ENCODE measurements at regions of chr4 and their contacts with region 1.

Region 1: GRCh38 chr4:121192480-121192879 is 28.4 kb upstream of the TNIP3 start:
- DNase-seq: no peak
- H3K4me3 Mint-ChIP-seq: peak overlapping the region; percentile 14
- H3K27ac Mint-ChIP-seq: peak overlapping the region; percentile 56
- H3K4me1 Mint-ChIP-seq: peaks cover 59% of the 10 kb centered on the region
- H3K27me3 Mint-ChIP-seq: no peaks in the 10 kb centered on the region

Region 2: GRCh38 chr4:121094297-121094966 is 98.0 kb before region 1 on chr4:
- CTCF ChIA-PET with region 1: no interaction called
- POLR2A ChIA-PET with region 1: no interaction called
- DNase-seq: no peak
- H3K4me3 Mint-ChIP-seq: no peak overlapping the region
- H3K27ac Mint-ChIP-seq: no peak overlapping the region
- H3K4me1 Mint-ChIP-seq: no peaks in the 10 kb centered on the region
- H3K27me3 Mint-ChIP-seq: no peaks in the 10 kb centered on the region

Region 3: GRCh38 chr4:121182296-121182695 is 10.2 kb before region 1 on chr4:
- CTCF ChIA-PET with region 1: interaction called, 30 read pairs
- POLR2A ChIA-PET with region 1: interaction called, 5 read pairs
- DNase-seq: no peak
- H3K4me3 Mint-ChIP-seq: peak overlapping the region; percentile 70
- H3K27ac Mint-ChIP-seq: peak overlapping the region; percentile 84
- H3K4me1 Mint-ChIP-seq: peaks cover 44% of the 10 kb centered on the region
- H3K27me3 Mint-ChIP-seq: no peaks in the 10 kb centered on the region

Region 4: GRCh38 chr4:121243485-121243884 is 51.0 kb after region 1 on chr4:
- CTCF ChIA-PET with region 1: interaction called, 20 read pairs
- POLR2A ChIA-PET with region 1: interaction called, 5 read pairs
- DNase-seq: no peak
- H3K4me3 Mint-ChIP-seq: peak overlapping the region; percentile 58
- H3K27ac Mint-ChIP-seq: no peak overlapping the region
- H3K4me1 Mint-ChIP-seq: peaks cover 18% of the 10 kb centered on the region
- H3K27me3 Mint-ChIP-seq: no peaks in the 10 kb centered on the region

Region 5: DNA sequence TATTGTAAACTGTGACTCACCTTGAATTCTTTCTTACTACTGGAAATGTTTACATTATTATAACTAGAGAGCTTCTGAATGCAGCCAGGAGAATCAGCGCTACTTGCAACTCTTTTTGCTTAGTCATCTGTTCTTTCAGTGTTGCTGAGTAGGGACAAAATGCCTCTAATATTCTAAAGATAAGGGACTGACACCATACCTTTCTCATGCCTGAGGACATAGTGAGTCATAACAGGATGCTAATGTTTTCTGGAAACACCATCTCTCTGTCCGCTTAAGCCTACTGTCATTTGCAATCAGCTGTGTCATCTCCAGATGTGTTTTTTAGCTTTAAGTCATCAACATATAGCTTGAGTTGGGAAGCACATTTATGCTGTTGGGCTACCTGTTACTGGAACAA is 80.0 kb after region 1 on chr4:
- CTCF ChIA-PET with region 1: interaction called, 21 read pairs
- POLR2A ChIA-PET with region 1: no interaction called
- DNase-seq: no peak
- H3K4me3 Mint-ChIP-seq: no peak overlapping the region
- H3K27ac Mint-ChIP-seq: peak overlapping the region; percentile 6
- H3K4me1 Mint-ChIP-seq: peaks cover 12% of the 10 kb centered on the region
- H3K27me3 Mint-ChIP-seq: no peaks in the 10 kb centered on the region

Region 6: DNA sequence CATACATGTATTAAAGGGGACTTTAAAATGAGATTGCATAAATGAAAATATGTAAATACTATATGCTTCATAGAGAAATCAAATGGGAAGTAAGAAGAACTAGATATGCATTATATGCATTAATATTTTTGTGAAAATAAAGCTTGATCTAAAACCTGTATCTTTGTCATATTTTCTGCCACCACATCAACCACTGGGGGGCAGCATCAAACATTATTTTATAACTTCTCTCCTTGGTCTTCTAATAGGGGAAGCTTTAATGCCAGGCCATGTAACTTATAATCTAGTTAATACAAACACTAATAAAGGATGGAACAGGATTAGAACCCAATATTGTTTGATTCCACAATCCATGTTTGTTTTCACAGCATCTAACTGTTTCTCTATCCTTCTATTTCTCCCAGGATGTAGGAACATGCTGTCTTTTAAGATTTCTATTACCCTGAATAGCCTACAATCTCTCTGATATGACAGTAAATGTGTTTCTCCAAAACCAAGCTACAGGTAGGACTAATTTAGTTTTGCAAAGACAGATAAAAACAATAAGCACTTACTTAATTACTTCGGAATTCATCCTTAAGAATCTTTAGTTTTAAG is 178.3 kb after region 1 on chr4:
- CTCF ChIA-PET with region 1: interaction called, 16 read pairs
- POLR2A ChIA-PET with region 1: no interaction called
- DNase-seq: peak; percentile 38
- H3K4me3 Mint-ChIP-seq: no peak overlapping the region
- H3K27ac Mint-ChIP-seq: no peak overlapping the region
- H3K4me1 Mint-ChIP-seq: peaks cover 1% of the 10 kb centered on the region
- H3K27me3 Mint-ChIP-seq: peaks cover 19% of the 10 kb centered on the region